IMR-90 (cell line): ENCODE measurements at regions of chr3 and their contacts with region 1.

Region 1: DNA sequence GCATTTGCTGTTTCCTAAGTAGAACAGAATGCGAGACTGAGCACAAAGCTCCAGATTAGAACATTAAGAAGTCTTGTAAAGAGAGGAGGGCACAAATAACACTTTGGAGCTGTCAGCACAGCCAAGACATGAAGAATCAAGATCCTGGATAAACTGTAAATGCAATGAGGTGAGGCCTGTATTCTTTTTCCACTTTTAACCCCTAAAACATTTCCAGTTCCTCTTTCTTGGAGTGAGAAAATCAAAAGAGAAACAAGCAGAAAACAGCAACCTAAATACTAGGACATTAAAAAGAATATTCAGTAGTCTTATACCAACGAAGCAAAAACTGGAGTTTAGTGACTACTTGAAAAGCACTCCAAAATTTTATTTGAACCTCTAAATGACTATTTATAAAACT is 204.3 kb downstream of the ZBTB20 start:
- DNase-seq: no peak
- ATAC-seq: no peak
- H3K4me3 ChIP-seq: no peak overlapping the region
- H3K27ac ChIP-seq: no peak overlapping the region
- H3K4me1 ChIP-seq: no peaks in the 10 kb centered on the region
- H3K27me3 ChIP-seq: no peaks in the 10 kb centered on the region
- CTCF ChIP-seq: no peak
- POLR2A ChIP-seq: no peak
- RAD21 ChIP-seq: no peak

Region 2: DNA sequence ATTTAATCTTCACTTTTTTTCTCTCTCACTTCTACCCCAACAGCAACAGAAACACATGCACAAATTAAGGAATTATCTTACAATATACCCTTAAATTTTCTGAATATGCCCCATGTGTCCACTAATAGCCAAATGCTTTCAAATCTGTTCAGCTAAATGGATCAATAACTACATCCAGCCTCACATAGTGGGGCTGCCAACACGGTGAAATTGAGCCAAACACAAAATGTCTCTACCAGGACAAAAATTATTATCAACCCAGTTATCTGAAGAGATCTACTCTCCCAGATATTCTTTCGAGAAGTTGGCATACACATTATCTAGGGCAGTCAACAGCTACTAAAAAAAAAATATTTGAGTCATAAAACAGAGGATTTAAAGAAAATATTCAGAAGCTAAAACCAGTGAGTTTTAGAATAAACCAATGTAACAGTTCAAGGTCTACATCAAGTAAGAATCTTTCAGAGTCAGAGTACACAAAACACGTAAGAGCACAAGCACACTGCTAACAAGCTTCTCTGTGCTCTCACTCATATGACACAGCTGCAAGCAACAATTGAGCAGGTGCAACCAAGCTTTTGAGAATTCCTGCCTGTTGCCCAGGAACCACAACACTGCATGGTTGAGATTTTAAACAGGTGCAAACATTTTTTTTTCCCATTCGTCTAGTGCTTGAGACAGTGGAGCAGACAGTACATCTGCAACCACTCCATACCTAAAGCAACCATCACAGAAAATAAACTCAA is 43.4 kb before region 1 on chr3:
- CTCF ChIA-PET with region 1: no interaction called
- POLR2A ChIA-PET with region 1: no interaction called
- dilution Hi-C with region 1: no loop called
- in situ Hi-C with region 1: no loop called
- intact Hi-C with region 1: no loop called
- DNase-seq: no peak
- ATAC-seq: no peak
- H3K4me3 ChIP-seq: no peak overlapping the region
- H3K27ac ChIP-seq: no peak overlapping the region
- H3K4me1 ChIP-seq: peaks cover 2% of the 10 kb centered on the region; the same call in 1 of the 2 replicates
- H3K27me3 ChIP-seq: no peaks in the 10 kb centered on the region
- CTCF ChIP-seq: no peak
- POLR2A ChIP-seq: no peak
- RAD21 ChIP-seq: no peak

Region 3: GRCh38 chr3:114953800-114954199 is 11.0 kb after region 1 on chr3:
- CTCF ChIA-PET with region 1: interaction called, 3 read pairs
- POLR2A ChIA-PET with region 1: no interaction called
- dilution Hi-C with region 1: no loop called
- in situ Hi-C with region 1: no loop called
- intact Hi-C with region 1: loop called (anchors 2 kb)
- DNase-seq: no peak
- ATAC-seq: peak; percentile 46
- H3K4me3 ChIP-seq: no peak overlapping the region
- H3K27ac ChIP-seq: no peak overlapping the region
- H3K4me1 ChIP-seq: no peaks in the 10 kb centered on the region
- H3K27me3 ChIP-seq: no peaks in the 10 kb centered on the region
- CTCF ChIP-seq: no peak
- POLR2A ChIP-seq: no peak
- RAD21 ChIP-seq: no peak